Activated B cell treated with CpG ODN at 0.5 μM for 24 hours (primary cell): ENCODE measurements at regions of chr4 and their contacts with region 1.

Region 1: GRCh38 chr4:163681208-163681821 is 186.8 kb downstream of the TMA16 start:
- DNase-seq: no peak
- ATAC-seq: peak; percentile 81
- H3K4me3 Mint-ChIP-seq: no peak overlapping the region
- H3K27ac Mint-ChIP-seq: peak overlapping the region; percentile 25
- H3K4me1 Mint-ChIP-seq: peaks cover 19% of the 10 kb centered on the region
- H3K27me3 Mint-ChIP-seq: peaks cover 3% of the 10 kb centered on the region
- CTCF ChIP-seq: no peak

Region 2: GRCh38 chr4:163003979-163004378 is 677.3 kb before region 1 on chr4:
- CTCF ChIA-PET with region 1: no interaction called
- POLR2A ChIA-PET with region 1: no interaction called
- intact Hi-C with region 1: no loop called
- DNase-seq: no peak
- ATAC-seq: no peak
- H3K4me3 Mint-ChIP-seq: no peak overlapping the region
- H3K27ac Mint-ChIP-seq: no peak overlapping the region
- H3K4me1 Mint-ChIP-seq: no peaks in the 10 kb centered on the region
- H3K27me3 Mint-ChIP-seq: peaks cover 2% of the 10 kb centered on the region
- CTCF ChIP-seq: no peak

Region 3: DNA sequence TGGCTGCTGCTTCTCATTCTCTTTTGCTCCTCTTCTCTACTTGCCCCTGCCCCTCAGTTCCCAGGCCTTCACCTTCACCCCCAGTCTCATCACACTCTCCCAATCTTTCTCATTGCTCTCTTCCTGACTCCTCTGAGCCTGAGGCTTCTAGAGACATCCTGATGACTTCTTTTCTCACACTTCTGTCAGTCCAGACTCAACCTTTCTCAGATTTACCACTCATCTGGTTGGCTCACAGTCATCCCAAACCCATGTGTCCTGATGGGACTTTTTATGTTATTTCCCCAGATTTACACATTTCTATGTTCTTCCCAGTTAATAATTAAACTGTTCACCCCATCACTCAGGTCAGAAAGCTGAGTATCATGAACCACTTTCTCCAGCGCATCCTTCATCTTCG is 118.8 kb before region 1 on chr4:
- CTCF ChIA-PET with region 1: interaction called, 767 read pairs
- POLR2A ChIA-PET with region 1: interaction called, 48 read pairs
- intact Hi-C with region 1: no loop called
- DNase-seq: no peak
- ATAC-seq: peak; percentile 13
- H3K4me3 Mint-ChIP-seq: no peak overlapping the region
- H3K27ac Mint-ChIP-seq: peak overlapping the region; percentile 85
- H3K4me1 Mint-ChIP-seq: peaks cover 76% of the 10 kb centered on the region
- H3K27me3 Mint-ChIP-seq: no peaks in the 10 kb centered on the region
- CTCF ChIP-seq: no peak

Region 4: DNA sequence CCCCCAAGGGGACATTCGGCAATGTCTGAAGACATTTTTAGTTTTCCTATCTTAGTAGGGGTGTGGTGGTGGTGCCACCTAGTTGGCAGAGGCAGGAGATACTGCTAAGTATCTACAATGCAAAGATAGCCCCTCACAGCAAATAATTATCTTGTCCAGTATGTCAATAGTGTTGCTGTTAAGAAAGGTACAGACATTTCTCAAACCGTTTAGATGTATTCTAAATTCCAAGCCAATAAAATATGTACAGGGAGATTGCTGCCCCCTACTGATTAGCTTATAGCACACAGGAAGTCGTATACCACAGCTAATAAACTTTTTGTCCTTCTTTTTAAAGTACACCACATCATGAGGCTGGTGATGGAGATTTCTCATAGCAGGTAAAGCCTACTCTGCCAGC is 73.7 kb after region 1 on chr4:
- CTCF ChIA-PET with region 1: interaction called, 9 read pairs
- POLR2A ChIA-PET with region 1: no interaction called
- intact Hi-C with region 1: loop called (anchors 1 kb)
- DNase-seq: no peak
- ATAC-seq: peak; percentile 56
- H3K4me3 Mint-ChIP-seq: peak overlapping the region; percentile 8
- H3K27ac Mint-ChIP-seq: no peak overlapping the region
- H3K4me1 Mint-ChIP-seq: peaks cover 3% of the 10 kb centered on the region
- H3K27me3 Mint-ChIP-seq: peaks cover 4% of the 10 kb centered on the region
- CTCF ChIP-seq: no peak

Region 5: DNA sequence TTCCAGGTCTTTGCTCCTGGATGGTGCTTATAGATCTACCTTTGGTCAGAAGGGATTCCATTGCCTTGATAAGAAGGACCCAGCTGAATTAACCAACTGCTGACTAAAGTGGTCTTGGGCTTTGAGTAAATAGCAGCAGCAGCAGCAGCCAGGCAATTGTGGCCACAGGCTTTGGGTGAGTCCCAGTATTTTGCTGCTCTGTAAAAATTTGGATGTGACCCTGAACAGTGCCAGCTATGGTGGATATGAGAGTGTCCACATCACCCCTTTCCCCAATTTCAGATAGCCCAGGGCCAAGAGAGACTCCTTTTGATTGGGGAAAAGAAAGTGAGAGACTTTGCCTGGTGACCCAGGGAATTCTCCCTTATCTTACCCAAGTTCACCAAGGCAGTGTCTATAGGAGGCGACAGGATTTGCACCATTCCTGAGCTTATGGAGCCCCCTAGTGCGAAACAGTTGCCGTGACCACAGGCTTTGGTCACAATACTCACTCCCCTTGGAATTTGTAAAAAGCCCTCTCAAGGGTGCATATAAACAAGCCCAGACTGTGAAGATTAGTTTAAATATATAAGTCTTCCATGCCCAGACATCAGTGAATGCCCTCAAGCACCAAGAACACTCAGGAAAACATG is 331.2 kb after region 1 on chr4:
- CTCF ChIA-PET with region 1: no interaction called
- POLR2A ChIA-PET with region 1: no interaction called
- intact Hi-C with region 1: loop called (anchors 10 kb)
- DNase-seq: no peak
- ATAC-seq: no peak
- H3K4me3 Mint-ChIP-seq: no peak overlapping the region
- H3K27ac Mint-ChIP-seq: no peak overlapping the region
- H3K4me1 Mint-ChIP-seq: no peaks in the 10 kb centered on the region
- H3K27me3 Mint-ChIP-seq: no peaks in the 10 kb centered on the region
- CTCF ChIP-seq: no peak

Region 6: GRCh38 chr4:164484551-164484950 is 803.2 kb after region 1 on chr4:
- CTCF ChIA-PET with region 1: no interaction called
- POLR2A ChIA-PET with region 1: no interaction called
- intact Hi-C with region 1: no loop called
- DNase-seq: no peak
- ATAC-seq: no peak
- H3K4me3 Mint-ChIP-seq: no peak overlapping the region
- H3K27ac Mint-ChIP-seq: no peak overlapping the region
- H3K4me1 Mint-ChIP-seq: no peaks in the 10 kb centered on the region
- H3K27me3 Mint-ChIP-seq: no peaks in the 10 kb centered on the region
- CTCF ChIP-seq: no peak

Region 7: DNA sequence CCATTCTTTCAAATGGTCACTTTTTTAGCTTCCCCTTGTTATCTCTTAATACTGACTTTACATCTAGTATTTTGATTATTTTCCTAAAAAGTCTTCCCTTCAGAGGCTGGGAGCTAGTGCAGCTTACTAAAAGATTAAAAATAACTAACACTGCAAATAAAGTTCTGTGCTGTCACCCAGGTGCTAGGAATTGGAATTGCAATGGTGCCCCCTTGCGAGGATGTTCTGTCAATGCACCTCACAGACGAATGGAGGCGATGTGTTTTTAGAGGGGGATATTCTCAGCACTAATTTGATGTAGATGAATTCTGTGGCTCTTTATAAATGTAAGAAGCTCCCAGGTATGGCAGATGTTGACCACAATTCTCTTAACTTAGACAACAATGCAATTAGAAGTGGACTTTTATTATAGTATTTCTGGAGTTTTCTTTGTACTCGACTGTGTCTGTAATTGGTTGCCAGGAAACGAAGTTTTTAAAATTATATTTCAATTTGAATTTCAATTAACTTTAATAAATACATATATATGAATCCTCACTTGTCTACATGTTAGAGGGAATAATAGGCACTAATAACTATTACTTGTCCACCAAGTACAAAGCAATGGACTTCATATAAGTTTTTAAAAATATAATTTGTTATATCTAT is 1050.6 kb after region 1 on chr4:
- CTCF ChIA-PET with region 1: interaction called, 3 read pairs
- POLR2A ChIA-PET with region 1: no interaction called
- intact Hi-C with region 1: loop called (anchors 5 kb)
- DNase-seq: peak; percentile 15
- ATAC-seq: peak; percentile 54
- H3K4me3 Mint-ChIP-seq: no peak overlapping the region
- H3K27ac Mint-ChIP-seq: no peak overlapping the region
- H3K4me1 Mint-ChIP-seq: no peaks in the 10 kb centered on the region
- H3K27me3 Mint-ChIP-seq: no peaks in the 10 kb centered on the region
- CTCF ChIP-seq: peak; percentile 89